Heart left ventricle (tissue), 16 donors: ENCODE measurements at regions of chr1 and their contacts with region 1.

Region 1: GRCh38 chr1:240611619-240612480 is at the start of gene GREM2:
- DNase-seq: peak in 1 of 5 donors; percentile 21
- ATAC-seq: peak in 3 of 4 donors; percentile 58 to 69 (median 62)
- H3K4me3 ChIP-seq: peak within 1 kb of the TSS; percentile 17 to 53 (median 44)
- H3K27ac ChIP-seq: peak within 1 kb of the TSS in 1 of 12 donors; percentile 72
- H3K4me1 ChIP-seq: peaks cover 0 to 12% (median 0%) of the 10 kb centered on the region in 12 donors
- H3K27me3 ChIP-seq: peaks cover 0 to 57% (median 25%) of the 10 kb centered on the region in 9 donors
- CTCF ChIP-seq: no peak
- POLR2A ChIP-seq: no peak
- total RNA-seq, gene GREM2: 0.66 TPM in 1 of 9 donors, not detected in the others

Region 2: GRCh38 chr1:240190881-240191401 is 420.9 kb before region 1 on chr1:
- intact Hi-C with region 1: loop called in 2 of 10 experiments (anchors 5 kb)
- DNase-seq: no peak
- ATAC-seq: no peak
- H3K4me3 ChIP-seq: no peak overlapping the region
- H3K27ac ChIP-seq: no peak overlapping the region
- H3K4me1 ChIP-seq: no peaks in the 10 kb centered on the region
- H3K27me3 ChIP-seq: peaks cover 0 to 19% (median 0%) of the 10 kb centered on the region in 9 donors
- CTCF ChIP-seq: peak in 4 of 12 donors; percentile 23 to 37 (median 32)
- POLR2A ChIP-seq: no peak

Region 3: DNA sequence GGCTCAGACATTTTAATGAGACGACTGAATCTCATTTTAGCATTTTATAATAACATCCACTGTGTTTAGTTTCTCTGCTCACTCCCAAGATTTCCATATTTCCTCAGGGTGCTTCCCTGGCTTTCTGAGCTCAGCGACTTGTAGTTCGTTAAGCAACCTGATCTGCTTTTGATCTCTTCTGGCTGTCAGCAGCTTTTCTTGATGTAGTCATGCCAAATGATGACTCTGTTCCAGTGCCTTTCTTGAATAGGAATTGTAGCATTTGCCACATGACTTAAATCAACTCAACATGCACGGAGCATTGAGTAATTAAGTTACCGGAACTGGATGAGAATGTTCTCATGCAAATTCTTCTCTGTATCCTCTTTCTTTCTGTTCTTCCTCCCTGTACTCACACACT is 274.1 kb before region 1 on chr1:
- intact Hi-C with region 1: no loop called
- DNase-seq: no peak
- ATAC-seq: no peak
- H3K4me3 ChIP-seq: no peak overlapping the region
- H3K27ac ChIP-seq: peak overlapping the region in 1 of 12 donors; percentile 50
- H3K4me1 ChIP-seq: no peaks in the 10 kb centered on the region
- H3K27me3 ChIP-seq: peaks cover 0 to 6% (median 0%) of the 10 kb centered on the region in 9 donors
- CTCF ChIP-seq: no peak
- POLR2A ChIP-seq: no peak

Region 4: GRCh38 chr1:240691521-240692338 is 79.9 kb after region 1 on chr1:
- intact Hi-C with region 1: no loop called
- DNase-seq: no peak
- ATAC-seq: no peak
- H3K4me3 ChIP-seq: no peak overlapping the region
- H3K27ac ChIP-seq: peak overlapping the region in 1 of 12 donors; percentile 8
- H3K4me1 ChIP-seq: no peaks in the 10 kb centered on the region
- H3K27me3 ChIP-seq: no peaks in the 10 kb centered on the region
- CTCF ChIP-seq: peak in 11 of 12 donors; percentile 16 to 48 (median 31)
- POLR2A ChIP-seq: no peak